ENCODE measurements at regions of chr14 and their contacts with region 1.

Region 1: DNA sequence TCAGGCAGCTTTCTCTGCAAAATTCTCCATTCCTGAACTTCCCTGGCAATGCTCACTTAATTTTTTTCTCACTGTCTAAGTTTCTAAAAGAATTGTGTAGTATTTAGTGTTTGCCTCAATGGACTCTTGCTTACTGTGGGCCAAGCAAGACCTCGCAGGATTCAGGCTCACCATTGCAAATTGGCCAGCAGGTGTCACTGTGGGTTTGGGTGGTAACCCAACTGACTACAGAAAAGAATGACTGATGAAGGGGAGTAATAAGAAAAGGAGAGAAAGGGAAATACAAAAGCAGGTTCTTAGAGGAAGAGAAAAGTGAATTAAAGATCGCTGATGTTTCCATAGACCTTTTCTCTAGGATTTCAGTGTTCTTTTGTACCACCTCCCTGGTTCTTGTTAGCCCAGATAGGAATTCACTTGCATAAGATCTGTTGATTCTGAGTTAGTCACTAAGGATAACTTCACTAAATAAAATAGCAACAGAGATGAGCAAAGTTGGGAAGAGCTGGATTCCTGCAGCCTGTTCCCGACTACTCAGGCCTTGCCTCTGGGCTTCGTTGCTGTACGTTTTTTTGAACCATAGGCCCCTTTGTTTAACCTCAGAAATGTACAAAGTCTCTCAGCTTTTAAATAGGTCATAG is 386.5 kb upstream of the DDHD1 start:
- DNase-seq: peak; percentile 50
- H3K4me3 ChIP-seq: no peak overlapping the region
- H3K27ac ChIP-seq: no peak overlapping the region
- H3K4me1 ChIP-seq: peaks cover 4% of the 10 kb centered on the region
- H3K27me3 ChIP-seq: no peaks in the 10 kb centered on the region
- CTCF ChIP-seq: peak; percentile 64 to 79 (median 72)
- POLR2A ChIP-seq: no peak

Region 2: GRCh38 chr14:53306267-53306721 is 233.3 kb before region 1 on chr14:
- intact Hi-C with region 1: loop called (anchors 5 kb)
- DNase-seq: peak; percentile 19
- H3K4me3 ChIP-seq: peak overlapping the region; percentile 9 to 21
- H3K27ac ChIP-seq: peak overlapping the region in 1 of 2 donors; percentile 32
- H3K4me1 ChIP-seq: no peaks in the 10 kb centered on the region
- H3K27me3 ChIP-seq: no peaks in the 10 kb centered on the region
- CTCF ChIP-seq: peak; percentile 35 to 85 (median 69)
- POLR2A ChIP-seq: no peak

Region 3: GRCh38 chr14:53432378-53432802 is 107.2 kb before region 1 on chr14:
- intact Hi-C with region 1: loop called (anchors 2 kb)
- DNase-seq: no peak
- H3K4me3 ChIP-seq: no peak overlapping the region
- H3K27ac ChIP-seq: no peak overlapping the region
- H3K4me1 ChIP-seq: no peaks in the 10 kb centered on the region
- H3K27me3 ChIP-seq: no peaks in the 10 kb centered on the region
- CTCF ChIP-seq: peak in 3 of 4 experiments; percentile 37 to 50 (median 44)
- POLR2A ChIP-seq: no peak

Region 4: GRCh38 chr14:53553221-53553620 is 13.6 kb after region 1 on chr14:
- intact Hi-C with region 1: no loop called
- DNase-seq: no peak
- H3K4me3 ChIP-seq: no peak overlapping the region
- H3K27ac ChIP-seq: no peak overlapping the region
- H3K4me1 ChIP-seq: no peaks in the 10 kb centered on the region
- H3K27me3 ChIP-seq: no peaks in the 10 kb centered on the region
- CTCF ChIP-seq: no peak
- POLR2A ChIP-seq: no peak

Region 5: DNA sequence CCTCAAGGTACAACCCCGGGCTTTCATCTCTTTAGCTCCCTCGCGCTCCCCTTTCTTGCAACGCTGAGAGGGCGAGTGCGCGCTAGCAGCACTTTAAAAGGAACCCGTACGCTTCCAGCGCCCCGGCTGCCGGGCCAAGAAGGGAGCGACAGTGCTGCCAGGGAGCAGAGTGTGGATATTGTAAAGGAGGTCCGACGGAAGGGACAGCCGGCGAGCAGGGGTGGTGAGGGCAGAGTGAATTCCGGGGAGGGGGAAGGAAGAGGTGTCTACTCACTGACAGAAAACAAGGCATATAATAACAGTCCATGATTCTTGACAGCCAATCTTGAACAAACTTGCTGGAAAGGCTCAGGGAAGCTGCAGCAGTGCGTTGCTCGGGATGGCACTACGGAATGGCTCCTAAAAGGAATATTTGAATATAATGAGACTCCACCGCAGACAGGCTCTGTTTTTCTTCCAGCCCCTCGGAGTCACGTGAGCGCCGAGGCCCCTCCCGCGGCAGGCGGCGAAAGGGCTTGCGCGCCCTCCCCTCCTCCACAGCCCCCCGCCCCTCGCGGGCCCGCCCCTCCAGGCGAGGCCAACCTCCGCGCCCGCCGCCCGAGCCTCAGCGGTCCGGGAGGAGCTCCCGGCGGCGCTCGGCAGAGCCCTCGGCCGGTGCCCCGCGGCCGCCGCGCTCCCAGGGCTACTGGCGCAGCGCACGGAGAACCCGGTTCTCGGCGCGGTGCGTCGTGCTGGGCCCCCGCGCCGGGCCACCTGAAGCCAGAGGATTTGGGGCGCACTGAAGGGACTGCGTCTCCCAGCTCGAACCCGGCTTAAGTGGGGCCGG is 413.6 kb after region 1 on chr14:
- intact Hi-C with region 1: loop called (anchors 2 kb)
- DNase-seq: peak; percentile 83
- H3K4me3 ChIP-seq: peak overlapping the region; percentile 50 to 56
- H3K27ac ChIP-seq: peak overlapping the region; percentile 85 to 87
- H3K4me1 ChIP-seq: no peaks in the 10 kb centered on the region
- H3K27me3 ChIP-seq: no peaks in the 10 kb centered on the region
- CTCF ChIP-seq: no peak
- POLR2A ChIP-seq: peak; percentile 89

Region 6: GRCh38 chr14:54175298-54175942 is 635.8 kb after region 1 on chr14:
- intact Hi-C with region 1: loop called (anchors 2 kb)
- DNase-seq: peak; percentile 59
- H3K4me3 ChIP-seq: no peak overlapping the region
- H3K27ac ChIP-seq: no peak overlapping the region
- H3K4me1 ChIP-seq: no peaks in the 10 kb centered on the region
- H3K27me3 ChIP-seq: no peaks in the 10 kb centered on the region
- CTCF ChIP-seq: peak; percentile 67 to 84 (median 81)
- POLR2A ChIP-seq: no peak

Region 7: DNA sequence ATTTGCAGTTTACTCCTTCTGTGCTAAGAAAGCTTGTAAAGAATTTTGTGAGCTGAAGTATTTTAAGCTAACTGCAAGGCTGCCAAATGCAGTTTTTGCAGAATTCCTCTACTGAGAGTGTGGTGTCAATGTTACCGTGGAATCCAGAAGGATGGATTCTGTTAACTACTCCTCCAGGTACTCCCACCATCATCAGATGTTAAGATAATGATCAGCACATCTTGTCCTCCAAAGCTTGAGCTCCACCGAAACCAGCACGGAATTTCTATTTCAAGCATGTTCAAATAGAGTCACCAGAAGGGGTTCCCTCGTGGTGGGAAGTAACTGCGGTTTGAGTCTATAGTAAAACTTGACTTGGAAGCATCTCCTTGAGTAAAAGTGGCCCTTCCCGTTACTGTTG is 792.9 kb after region 1 on chr14:
- intact Hi-C with region 1: loop called (anchors 2 kb)
- DNase-seq: no peak
- H3K4me3 ChIP-seq: no peak overlapping the region
- H3K27ac ChIP-seq: no peak overlapping the region
- H3K4me1 ChIP-seq: no peaks in the 10 kb centered on the region
- H3K27me3 ChIP-seq: no peaks in the 10 kb centered on the region
- CTCF ChIP-seq: no peak
- POLR2A ChIP-seq: no peak

Region 8: DNA sequence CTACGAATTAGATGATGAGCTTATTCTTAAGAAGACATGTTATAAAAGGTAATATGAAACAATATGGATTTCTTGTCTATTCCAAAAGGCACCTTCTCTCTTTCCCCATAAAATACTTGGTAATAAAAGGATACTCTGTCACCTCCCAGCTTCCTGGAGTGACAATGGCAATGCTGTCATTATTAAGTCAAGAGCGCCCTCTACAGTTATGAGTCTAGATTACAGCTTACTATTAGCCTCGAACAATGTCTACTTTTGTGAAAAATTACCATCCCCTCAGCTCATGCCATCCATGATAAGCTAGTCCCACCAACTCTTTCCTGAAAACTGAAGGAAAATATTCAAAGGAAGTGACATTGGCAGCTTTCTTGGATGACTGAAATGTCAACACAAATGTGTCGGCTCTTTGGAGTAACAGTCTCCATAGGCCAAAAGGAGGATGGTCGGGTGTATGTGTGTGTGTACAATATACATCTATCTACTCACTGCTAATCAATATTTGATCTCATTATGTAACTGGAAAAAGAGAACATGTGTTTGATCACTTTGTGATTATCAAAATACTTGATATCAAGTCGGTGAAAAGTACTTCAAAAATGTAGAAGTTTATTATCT is 808.5 kb after region 1 on chr14:
- intact Hi-C with region 1: loop called (anchors 5 kb)
- DNase-seq: peak; percentile 43
- H3K4me3 ChIP-seq: no peak overlapping the region
- H3K27ac ChIP-seq: no peak overlapping the region
- H3K4me1 ChIP-seq: peaks cover 1% of the 10 kb centered on the region
- H3K27me3 ChIP-seq: no peaks in the 10 kb centered on the region
- CTCF ChIP-seq: peak in 3 of 4 experiments; percentile 72 to 81 (median 79)
- POLR2A ChIP-seq: no peak

Measured in prostate gland (tissue), 2 donors.